ENCODE measurements at regions of chr6 and their contacts with region 1.

Region 1: DNA sequence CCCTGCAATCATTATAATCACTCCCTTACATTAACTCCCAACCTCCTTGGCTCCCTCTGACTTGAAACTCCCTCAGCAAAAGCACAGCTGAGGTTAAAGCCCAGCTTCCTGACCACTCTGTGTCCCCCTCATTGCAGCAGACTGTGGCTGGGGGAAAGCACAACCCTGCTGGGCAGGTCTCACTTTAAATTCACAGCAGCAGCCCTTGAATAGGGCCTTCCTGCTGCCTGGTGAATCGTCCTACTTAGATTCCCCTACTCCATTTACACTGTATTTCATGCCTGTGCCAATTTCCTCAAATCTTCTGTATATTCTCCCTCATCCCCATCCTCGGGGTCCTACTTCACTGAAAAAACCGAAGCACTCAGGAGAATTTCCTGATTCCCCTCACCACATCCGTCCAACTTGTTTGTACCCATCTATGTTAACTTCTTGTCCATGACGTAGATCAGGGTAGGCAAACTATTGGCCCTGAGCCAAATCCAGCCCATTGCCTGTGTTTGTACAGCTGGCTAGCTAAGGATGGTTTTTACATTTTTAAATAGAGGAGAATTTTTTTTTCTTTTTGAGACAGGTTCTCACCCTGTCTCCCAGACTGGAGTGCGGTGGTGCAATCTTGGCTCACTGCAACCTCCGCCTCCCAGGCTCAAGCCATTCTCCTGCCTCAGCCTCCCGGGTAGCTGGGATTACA is 31.5 kb upstream of the GCM1 start:
- ATAC-seq: peak in 6 of 8 experiments; percentile 34 to 95 (median 39)
- H3K4me3 ChIP-seq: no peak overlapping the region
- H3K27ac ChIP-seq: no peak overlapping the region
- H3K4me1 ChIP-seq: peaks cover 0 to 2% of the 10 kb centered on the region in 2 donors

Region 2: DNA sequence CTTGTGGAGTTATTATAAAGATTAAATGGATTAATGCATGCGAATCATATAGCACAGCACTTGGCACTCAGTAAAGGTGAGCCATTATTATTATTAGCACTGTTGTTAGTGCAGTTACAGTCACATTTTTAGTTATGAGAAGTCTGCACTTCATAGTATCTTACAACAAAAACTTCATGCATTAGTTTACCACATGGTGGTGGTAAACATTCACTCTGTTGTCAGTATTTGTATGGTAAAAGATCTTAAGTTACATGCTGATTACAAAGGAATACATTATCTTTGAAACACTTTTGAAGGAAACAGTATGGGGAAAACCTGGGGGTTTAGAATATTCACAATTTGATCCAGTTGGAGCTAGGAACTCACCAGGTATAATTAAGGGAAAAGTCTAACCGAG is 488.4 kb before region 1 on chr6:
- in situ Hi-C with region 1: no loop called
- ATAC-seq: no peak
- H3K4me3 ChIP-seq: no peak overlapping the region
- H3K27ac ChIP-seq: no peak overlapping the region
- H3K4me1 ChIP-seq: no peaks in the 10 kb centered on the region

Region 3: DNA sequence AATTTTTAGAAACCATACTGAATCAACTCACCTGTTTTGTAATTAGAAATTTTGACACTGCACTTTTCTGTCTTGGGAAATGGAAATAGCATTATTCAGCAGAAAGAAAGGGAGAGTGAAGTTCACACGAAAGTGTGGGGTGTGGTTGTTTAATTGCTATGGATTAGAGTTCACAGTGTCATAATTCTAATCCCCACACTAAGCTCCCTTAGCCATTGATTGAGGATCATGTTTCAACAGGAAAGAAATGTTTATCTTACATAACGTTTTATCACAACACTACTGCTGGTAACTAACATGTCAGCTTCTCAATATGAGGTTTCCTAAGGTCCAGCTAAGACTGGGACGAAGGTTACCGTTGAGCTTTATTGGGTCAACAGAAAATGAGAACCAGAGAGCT is 308.1 kb before region 1 on chr6:
- in situ Hi-C with region 1: no loop called
- ATAC-seq: peak in 2 of 8 experiments; percentile 21 to 37
- H3K4me3 ChIP-seq: no peak overlapping the region
- H3K27ac ChIP-seq: no peak overlapping the region
- H3K4me1 ChIP-seq: no peaks in the 10 kb centered on the region

Region 4: GRCh38 chr6:53437557-53438202 is 257.6 kb after region 1 on chr6:
- in situ Hi-C with region 1: loop called in 2 of 9 experiments (anchors 25 kb)
- ATAC-seq: peak in 7 of 8 experiments; percentile 25 to 94 (median 76)
- H3K4me3 ChIP-seq: no peak overlapping the region
- H3K27ac ChIP-seq: no peak overlapping the region
- H3K4me1 ChIP-seq: peaks cover 9 to 12% of the 10 kb centered on the region in 2 donors

Region 5: DNA sequence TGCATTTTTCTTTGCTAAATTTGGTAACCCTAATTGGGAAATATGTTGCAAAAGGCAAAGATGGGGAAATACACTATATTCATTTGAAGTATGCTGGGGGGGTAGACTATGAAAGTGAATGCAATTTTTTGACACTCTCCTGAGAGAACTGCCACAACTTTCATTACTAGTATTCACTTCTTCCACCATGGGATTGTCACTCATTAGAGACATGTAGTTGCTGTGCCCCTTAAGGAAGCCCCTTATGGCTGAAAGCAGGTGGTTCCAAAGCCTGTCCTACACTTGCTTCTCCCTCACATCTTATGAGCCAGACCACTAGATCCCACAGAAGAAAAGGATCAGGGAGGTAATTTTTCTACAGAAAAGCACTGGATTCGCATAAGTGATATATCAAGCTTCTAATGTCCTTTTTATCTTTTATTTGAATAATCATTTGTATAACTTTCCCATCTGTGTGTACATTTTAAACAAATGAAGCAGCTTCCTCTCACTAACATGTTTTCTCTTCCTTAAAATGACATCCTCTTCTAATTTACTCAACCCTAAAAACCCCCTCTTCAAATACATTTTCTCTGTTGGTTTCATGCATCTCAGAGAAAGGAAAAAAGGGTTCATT is 281.0 kb after region 1 on chr6:
- in situ Hi-C with region 1: loop called in 1 of 9 experiments (anchors 25 kb)
- ATAC-seq: no peak
- H3K4me3 ChIP-seq: no peak overlapping the region
- H3K27ac ChIP-seq: no peak overlapping the region
- H3K4me1 ChIP-seq: peaks cover 0 to 3% of the 10 kb centered on the region in 2 donors

Measured in motor neuron (in vitro differentiated cells).